ENCODE measurements at regions of chr6 and their contacts with region 1.

Region 1: DNA sequence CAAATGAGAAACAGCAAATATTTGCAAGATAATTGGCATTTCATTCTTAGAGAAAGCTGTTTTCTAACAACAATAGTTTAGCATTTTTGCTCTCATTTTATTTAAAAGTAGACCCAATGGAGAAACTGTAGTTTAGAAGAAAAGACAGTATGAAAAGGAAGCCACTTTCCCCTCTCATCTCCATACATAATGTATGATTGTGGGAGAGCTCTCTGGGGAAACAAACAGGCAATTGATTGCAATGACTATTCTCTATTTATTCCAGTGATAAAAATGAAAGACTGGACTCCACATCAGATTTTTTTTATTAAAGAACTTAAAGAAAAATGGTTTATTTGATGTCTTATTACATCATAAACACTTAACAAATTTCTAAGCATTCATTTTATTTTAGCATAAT is 116.8 kb upstream of the SASH1 start:
- DNase-seq: no peak
- ATAC-seq: no peak

Region 2: DNA sequence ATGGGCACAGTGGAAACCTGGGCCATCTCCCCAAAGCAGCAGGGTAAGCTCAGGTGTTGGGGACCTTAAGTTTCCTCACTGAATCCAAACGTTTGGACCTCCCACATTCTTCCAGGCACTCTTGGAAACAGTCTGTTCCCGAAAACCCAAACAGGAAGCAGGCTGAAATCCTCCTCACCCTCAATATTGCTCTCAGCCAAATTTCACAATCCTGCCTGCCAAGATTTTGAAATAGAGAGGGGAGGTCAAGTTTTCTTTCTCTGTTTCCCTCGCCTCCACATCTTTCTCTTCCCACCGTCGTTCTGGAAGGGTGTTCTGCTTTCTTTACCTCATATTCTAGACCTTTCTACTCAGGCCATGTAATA is 275.3 kb before region 1 on chr6:
- intact Hi-C with region 1: no loop called
- DNase-seq: no peak
- ATAC-seq: peak; percentile 51

Region 3: DNA sequence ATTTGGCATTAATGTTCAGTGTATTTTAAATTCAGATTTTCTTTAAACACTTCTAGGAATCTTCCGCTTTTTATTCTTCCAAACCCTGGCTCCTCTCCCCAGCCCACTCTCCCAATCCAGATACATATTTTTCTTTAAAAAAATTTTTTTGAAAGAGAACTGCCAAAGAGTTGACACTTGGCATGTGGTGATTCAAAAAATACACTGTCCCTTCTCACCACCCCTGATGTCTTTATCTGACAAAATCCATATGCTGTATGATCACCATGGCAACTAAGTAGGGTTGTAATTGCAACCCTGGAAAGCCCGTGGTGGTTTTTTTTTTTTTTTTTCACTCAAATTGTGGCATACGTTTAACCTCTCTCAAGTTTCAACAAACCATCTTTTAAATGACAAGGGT is 239.0 kb before region 1 on chr6:
- intact Hi-C with region 1: no loop called
- DNase-seq: no peak
- ATAC-seq: no peak

Region 4: GRCh38 chr6:148263010-148263409 is 37.1 kb after region 1 on chr6:
- intact Hi-C with region 1: loop called (anchors 2 kb)
- DNase-seq: no peak
- ATAC-seq: no peak

Measured in Right ventricle myocardium superior (tissue), 1 donor.